Left ventricle myocardium superior (tissue), 1 donor: ENCODE measurements at regions of chr2 and their contacts with region 1.

Region 1: DNA sequence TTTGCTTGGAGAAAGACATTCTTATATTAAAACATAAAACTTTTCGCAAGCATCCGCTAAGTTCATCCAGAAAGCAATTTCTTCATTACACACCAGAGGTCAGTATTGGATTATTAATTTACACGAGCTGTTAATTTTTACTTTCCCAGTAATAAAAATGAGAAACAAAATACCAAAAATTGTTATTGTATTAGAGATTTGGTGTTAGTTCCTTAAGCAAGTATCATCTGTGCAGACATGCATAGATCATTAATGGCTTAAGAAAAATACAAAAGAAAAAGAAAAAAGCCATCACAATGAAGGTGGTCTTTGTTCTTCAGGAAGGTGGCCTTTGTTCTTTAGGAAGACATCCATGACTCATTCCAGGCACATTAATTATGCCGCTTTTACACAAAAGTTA is 53.6 kb upstream of the HNMT start:
- DNase-seq: no peak
- ATAC-seq: no peak

Region 2: GRCh38 chr2:138827426-138828054 is 916.9 kb after region 1 on chr2:
- intact Hi-C with region 1: loop called (anchors 5 kb)
- DNase-seq: no peak
- ATAC-seq: peak; percentile 57